Ovary (tissue), 10 donors: ENCODE measurements at regions of chr7 and their contacts with region 1.

Region 1: DNA sequence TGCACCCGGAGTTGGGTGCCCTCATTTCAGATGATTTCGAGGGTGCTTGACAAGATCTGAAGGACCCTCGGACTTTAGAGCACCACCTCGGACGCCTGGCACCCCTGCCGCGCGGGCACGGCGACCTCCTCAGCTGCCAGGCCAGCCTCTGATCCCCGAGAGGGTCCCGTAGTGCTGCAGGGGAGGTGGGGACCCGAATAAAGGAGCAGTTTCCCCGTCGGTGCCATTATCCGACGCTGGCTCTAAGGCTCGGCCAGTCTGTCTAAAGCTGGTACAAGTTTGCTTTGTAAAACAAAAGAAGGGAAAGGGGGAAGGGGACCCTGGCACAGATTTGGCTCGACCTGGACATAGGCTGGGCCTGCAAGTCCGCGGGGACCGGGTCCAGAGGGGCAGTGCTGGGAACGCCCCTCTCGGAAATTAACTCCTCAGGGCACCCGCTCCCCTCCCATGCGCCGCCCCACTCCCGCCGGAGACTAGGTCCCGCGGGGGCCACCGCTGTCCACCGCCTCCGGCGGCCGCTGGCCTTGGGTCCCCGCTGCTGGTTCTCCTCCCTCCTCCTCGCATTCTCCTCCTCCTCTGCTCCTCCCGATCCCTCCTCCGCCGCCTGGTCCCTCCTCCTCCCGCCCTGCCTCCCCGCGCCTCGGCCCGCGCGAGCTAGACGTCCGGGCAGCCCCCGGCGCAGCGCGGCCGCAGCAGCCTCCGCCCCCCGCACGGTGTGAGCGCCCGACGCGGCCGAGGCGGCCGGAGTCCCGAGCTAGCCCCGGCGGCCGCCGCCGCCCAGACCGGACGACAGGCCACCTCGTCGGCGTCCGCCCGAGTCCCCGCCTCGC is at the start of gene EGFR:
- DNase-seq: peak; percentile 83 to 88 (median 85)
- H3K4me3 ChIP-seq: peak within 1 kb of the TSS; percentile 78
- H3K27ac ChIP-seq: peak within 1 kb of the TSS; percentile 84 to 88
- H3K4me1 ChIP-seq: peaks cover 4% of the 10 kb centered on the region
- H3K27me3 ChIP-seq: no peaks in the 10 kb centered on the region
- CTCF ChIP-seq: no peak
- EP300 ChIP-seq: no peak
- POLR2A ChIP-seq: peak; percentile 86
- total RNA-seq, gene EGFR: 26.3 to 54.6 (median 45.4) TPM

Region 2: GRCh38 chr7:54299426-54299825 is 719.1 kb before region 1 on chr7:
- intact Hi-C with region 1: no loop called
- DNase-seq: no peak
- H3K4me3 ChIP-seq: no peak overlapping the region
- H3K27ac ChIP-seq: no peak overlapping the region
- H3K4me1 ChIP-seq: no peaks in the 10 kb centered on the region
- H3K27me3 ChIP-seq: no peaks in the 10 kb centered on the region
- CTCF ChIP-seq: no peak
- EP300 ChIP-seq: no peak
- POLR2A ChIP-seq: no peak

Region 3: DNA sequence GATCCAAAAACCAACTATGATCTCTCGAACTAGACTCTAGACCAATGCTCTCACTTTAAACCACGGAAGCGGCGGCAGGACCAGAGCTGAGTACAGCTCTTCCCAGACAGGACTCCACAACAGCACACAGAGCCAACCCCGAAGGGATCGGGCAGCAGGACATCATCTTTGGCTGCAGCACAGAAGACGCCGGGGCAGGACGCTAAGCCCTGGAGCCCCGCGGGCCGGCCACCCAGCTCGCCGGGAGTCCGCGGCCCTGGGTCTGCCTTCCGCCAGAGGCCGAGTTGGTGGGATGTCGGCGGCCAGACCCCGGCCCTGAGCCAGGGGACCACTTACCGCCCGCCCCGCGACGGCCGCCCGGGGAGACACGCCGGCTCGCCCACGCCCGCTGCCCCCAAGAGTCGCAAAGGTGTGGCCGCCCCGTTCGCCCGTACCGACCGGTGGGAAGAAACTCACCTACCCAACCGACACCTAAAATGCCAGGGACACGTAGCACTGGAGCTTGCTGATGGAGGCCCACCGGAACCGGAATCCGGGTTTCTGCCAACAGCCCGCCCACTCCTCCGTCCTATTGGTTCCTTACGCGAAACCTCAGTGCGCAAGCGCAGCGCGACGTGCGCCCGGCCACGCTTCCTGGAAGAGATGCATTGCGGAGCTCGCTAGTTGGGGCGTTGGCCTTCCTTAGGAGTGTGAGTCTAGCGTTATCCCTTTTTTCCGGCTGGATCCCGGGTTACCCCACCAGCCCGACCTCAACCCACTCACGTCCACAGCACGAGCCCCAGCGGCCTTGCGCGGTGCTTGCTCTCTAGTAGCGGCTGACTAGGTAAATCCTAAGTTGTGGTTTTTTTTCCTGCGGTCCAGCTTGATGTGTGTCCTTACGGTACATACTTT is 259.6 kb before region 1 on chr7 and contains the start of gene SEC61G:
- intact Hi-C with region 1: no loop called
- DNase-seq: peak; percentile 96 to 99 (median 98)
- H3K4me3 ChIP-seq: peak within 1 kb of the TSS; percentile 97
- H3K27ac ChIP-seq: peak within 1 kb of the TSS; percentile 61 to 74
- H3K4me1 ChIP-seq: peaks cover 4% of the 10 kb centered on the region
- H3K27me3 ChIP-seq: no peaks in the 10 kb centered on the region
- CTCF ChIP-seq: no peak
- EP300 ChIP-seq: no peak
- POLR2A ChIP-seq: peak; percentile 94
- total RNA-seq, gene SEC61G: 66.7 to 165 (median 79.9) TPM

Region 4: DNA sequence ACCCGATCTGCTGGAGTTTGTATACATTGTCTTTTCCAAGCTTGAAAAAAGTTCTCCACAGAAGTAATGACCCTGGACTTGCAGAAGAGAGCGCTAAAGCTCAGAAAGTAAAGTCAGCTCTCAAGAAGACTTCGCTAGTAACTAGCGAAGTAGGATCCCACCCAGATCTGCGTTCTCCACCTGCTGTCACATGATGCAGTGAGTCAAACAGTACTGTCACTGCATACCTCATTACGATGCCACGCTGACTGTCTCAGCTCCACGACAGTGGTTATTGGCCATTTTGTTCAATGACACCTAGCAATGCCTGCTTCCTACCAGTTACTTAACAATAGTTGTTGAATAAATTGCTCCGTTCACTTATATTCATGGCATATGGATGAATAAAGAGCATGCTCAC is 229.9 kb before region 1 on chr7:
- intact Hi-C with region 1: loop called in 1 of 4 experiments (anchors 10 kb)
- DNase-seq: peak in 4 of 5 donors; percentile 36 to 57 (median 38)
- H3K4me3 ChIP-seq: no peak overlapping the region
- H3K27ac ChIP-seq: no peak overlapping the region
- H3K4me1 ChIP-seq: peaks cover 2% of the 10 kb centered on the region
- H3K27me3 ChIP-seq: no peaks in the 10 kb centered on the region
- CTCF ChIP-seq: peak; percentile 66 to 77 (median 75)
- EP300 ChIP-seq: no peak
- POLR2A ChIP-seq: no peak

Region 5: GRCh38 chr7:54874804-54875203 is 143.8 kb before region 1 on chr7:
- intact Hi-C with region 1: no loop called
- DNase-seq: no peak
- H3K4me3 ChIP-seq: no peak overlapping the region
- H3K27ac ChIP-seq: no peak overlapping the region
- H3K4me1 ChIP-seq: no peaks in the 10 kb centered on the region
- H3K27me3 ChIP-seq: no peaks in the 10 kb centered on the region
- CTCF ChIP-seq: no peak
- EP300 ChIP-seq: no peak
- POLR2A ChIP-seq: no peak

Region 6: DNA sequence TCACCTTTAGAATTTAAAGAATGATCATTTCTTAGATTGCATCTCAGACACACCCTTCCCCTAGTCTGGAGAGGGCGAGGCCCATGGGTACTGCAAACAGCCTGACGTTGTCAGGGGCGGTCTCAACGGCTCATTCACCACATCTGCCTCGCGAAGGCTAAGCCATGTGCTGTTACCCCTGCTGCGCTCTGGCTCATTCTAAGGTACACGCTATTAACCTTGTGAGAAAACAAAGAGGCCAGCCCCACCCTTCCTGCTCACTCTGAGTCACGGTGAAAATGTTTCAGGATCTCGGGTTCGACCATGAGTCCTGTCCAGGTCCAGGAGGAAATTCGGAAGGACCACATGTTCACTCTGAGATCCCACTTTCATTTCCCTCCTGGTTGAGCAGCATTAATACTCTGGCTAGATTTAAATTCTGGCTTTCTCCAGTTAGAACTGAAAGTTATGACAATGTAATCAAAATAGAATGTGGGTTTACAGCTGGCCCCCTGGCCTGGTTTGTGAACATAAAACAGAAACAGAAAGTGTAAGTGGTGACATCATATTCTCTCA is 55.4 kb after region 1 on chr7:
- intact Hi-C with region 1: loop called in 2 of 4 experiments (anchors 10 kb)
- DNase-seq: peak in 1 of 5 donors; percentile 38
- H3K4me3 ChIP-seq: no peak overlapping the region
- H3K27ac ChIP-seq: peak overlapping the region; percentile 2 to 69
- H3K4me1 ChIP-seq: peaks cover 27% of the 10 kb centered on the region
- H3K27me3 ChIP-seq: no peaks in the 10 kb centered on the region
- CTCF ChIP-seq: no peak
- EP300 ChIP-seq: no peak
- POLR2A ChIP-seq: no peak

Region 7: DNA sequence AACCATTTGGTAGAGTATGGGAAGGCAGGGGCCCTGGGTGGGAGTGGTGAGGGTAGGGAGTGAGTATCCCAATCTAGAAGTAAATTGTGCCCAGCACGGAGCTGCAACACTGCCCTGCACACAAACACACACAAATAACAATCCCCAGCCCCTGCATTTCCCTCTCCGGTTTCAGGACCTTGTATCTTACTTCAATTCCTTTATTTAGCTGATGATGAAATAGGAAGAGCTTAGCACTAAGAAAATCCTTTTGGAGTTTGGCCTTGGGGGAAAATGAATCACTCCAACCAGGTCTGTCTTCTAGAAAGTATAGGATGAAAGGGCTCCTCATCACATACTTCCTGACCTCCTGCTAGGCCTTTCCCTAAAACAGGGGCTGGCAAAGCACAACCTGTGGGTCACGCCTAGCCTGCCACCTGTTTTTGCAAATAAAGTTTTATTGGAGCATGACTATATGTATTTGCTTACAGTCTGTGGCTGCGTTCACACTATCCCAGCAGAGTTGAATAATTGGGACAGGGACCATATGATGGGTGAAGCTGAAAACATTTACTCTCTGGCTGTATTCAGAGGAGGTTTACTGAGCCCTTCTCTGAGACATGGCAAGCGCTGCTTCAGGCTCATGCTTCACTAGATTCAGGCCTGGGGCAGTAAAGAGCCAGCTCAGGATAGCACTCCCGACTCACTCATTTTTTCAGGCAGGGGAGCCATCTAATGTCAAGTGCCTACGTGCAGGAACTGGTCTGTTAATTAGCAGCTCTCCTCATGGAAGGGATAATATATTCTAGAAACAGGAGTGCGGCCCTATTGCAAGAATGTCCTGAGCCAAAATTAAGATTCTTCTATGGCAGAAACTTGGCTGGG is 111.2 kb after region 1 on chr7:
- intact Hi-C with region 1: loop called in 2 of 4 experiments (anchors 1 to 10 kb)
- DNase-seq: peak in 2 of 5 donors; percentile 24 to 48
- H3K4me3 ChIP-seq: no peak overlapping the region
- H3K27ac ChIP-seq: peak overlapping the region in 1 of 2 donors; percentile 74
- H3K4me1 ChIP-seq: peaks cover 33% of the 10 kb centered on the region
- H3K27me3 ChIP-seq: no peaks in the 10 kb centered on the region
- CTCF ChIP-seq: no peak
- EP300 ChIP-seq: no peak
- POLR2A ChIP-seq: no peak

Region 8: GRCh38 chr7:55177589-55178261 is 159.1 kb after region 1 on chr7:
- intact Hi-C with region 1: loop called in 2 of 4 experiments (anchors 10 kb)
- DNase-seq: peak in 4 of 5 donors; percentile 58 to 76 (median 64)
- H3K4me3 ChIP-seq: no peak overlapping the region
- H3K27ac ChIP-seq: peak overlapping the region; percentile 27 to 78
- H3K4me1 ChIP-seq: peaks cover 27% of the 10 kb centered on the region
- H3K27me3 ChIP-seq: no peaks in the 10 kb centered on the region
- CTCF ChIP-seq: no peak
- EP300 ChIP-seq: no peak
- POLR2A ChIP-seq: no peak

Region 9: GRCh38 chr7:55185941-55186609 is 167.5 kb after region 1 on chr7:
- intact Hi-C with region 1: loop called in 1 of 4 experiments (anchors 10 kb)
- DNase-seq: no peak
- H3K4me3 ChIP-seq: no peak overlapping the region
- H3K27ac ChIP-seq: no peak overlapping the region
- H3K4me1 ChIP-seq: peaks cover 23% of the 10 kb centered on the region
- H3K27me3 ChIP-seq: no peaks in the 10 kb centered on the region
- CTCF ChIP-seq: no peak
- EP300 ChIP-seq: no peak
- POLR2A ChIP-seq: no peak

Region 10: DNA sequence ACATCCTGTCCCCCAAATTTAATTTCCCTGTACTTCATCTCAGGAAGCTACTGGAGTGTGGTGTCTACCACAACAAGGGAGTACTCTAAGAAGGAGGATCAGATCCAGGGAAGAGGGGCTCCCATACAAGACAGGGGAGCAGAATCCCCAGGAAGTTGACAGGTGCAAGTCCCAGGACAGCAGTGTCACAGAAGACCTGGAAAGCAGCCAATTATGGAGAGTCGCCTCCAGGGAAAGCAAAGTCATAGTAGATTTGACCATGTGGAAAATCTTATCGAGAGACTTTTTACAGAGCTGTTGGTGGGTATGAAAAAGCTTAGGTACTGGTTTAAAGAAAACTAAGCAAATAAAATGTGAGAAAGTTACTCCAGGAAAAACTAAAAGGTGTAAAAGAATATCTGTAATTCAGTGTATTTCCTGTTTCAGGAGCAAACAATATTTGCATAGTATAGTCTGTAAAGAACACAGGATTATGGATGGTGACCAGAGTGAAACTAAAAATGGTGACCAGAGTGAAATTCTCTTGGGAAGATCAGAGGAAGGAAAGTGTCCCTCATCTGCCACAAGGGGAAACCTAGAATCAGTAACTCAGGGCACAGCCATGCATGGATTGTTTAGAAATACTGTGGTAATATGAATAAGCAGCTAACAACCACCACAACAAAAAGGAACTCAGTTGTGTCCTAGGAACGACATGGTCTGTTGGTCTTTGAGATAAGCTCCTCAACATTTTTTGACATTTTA is 391.1 kb after region 1 on chr7:
- intact Hi-C with region 1: no loop called
- DNase-seq: no peak
- H3K4me3 ChIP-seq: no peak overlapping the region
- H3K27ac ChIP-seq: no peak overlapping the region
- H3K4me1 ChIP-seq: no peaks in the 10 kb centered on the region
- H3K27me3 ChIP-seq: no peaks in the 10 kb centered on the region
- CTCF ChIP-seq: no peak
- EP300 ChIP-seq: no peak
- POLR2A ChIP-seq: no peak